Activated B cell treated with CpG ODN at 0.5 μM for 24 hours (primary cell): ENCODE measurements at regions of chr2 and their contacts with region 1.

Region 1: GRCh38 chr2:12057436-12058166 is 311.2 kb downstream of the LPIN1 start:
- DNase-seq: peak; percentile 57
- ATAC-seq: peak; percentile 88
- H3K4me3 Mint-ChIP-seq: peak overlapping the region; percentile 47
- H3K27ac Mint-ChIP-seq: peak overlapping the region; percentile 50
- H3K4me1 Mint-ChIP-seq: peaks cover 67% of the 10 kb centered on the region
- H3K27me3 Mint-ChIP-seq: no peaks in the 10 kb centered on the region
- CTCF ChIP-seq: no peak

Region 2: GRCh38 chr2:12071318-12071717 is 13.7 kb after region 1 on chr2:
- CTCF ChIA-PET with region 1: no interaction called
- POLR2A ChIA-PET with region 1: no interaction called
- intact Hi-C with region 1: loop called (anchors 2 kb)
- DNase-seq: no peak
- ATAC-seq: peak; percentile 83
- H3K4me3 Mint-ChIP-seq: peak overlapping the region; percentile 11
- H3K27ac Mint-ChIP-seq: peak overlapping the region; percentile 61
- H3K4me1 Mint-ChIP-seq: peaks cover 63% of the 10 kb centered on the region
- H3K27me3 Mint-ChIP-seq: no peaks in the 10 kb centered on the region
- CTCF ChIP-seq: no peak

Region 3: GRCh38 chr2:12227941-12228608 is 170.5 kb after region 1 on chr2:
- CTCF ChIA-PET with region 1: no interaction called
- POLR2A ChIA-PET with region 1: no interaction called
- intact Hi-C with region 1: no loop called
- DNase-seq: no peak
- ATAC-seq: no peak
- H3K4me3 Mint-ChIP-seq: no peak overlapping the region
- H3K27ac Mint-ChIP-seq: no peak overlapping the region
- H3K4me1 Mint-ChIP-seq: no peaks in the 10 kb centered on the region
- H3K27me3 Mint-ChIP-seq: no peaks in the 10 kb centered on the region
- CTCF ChIP-seq: no peak